ENCODE measurements at regions of chr12 and their contacts with region 1.

Region 1: DNA sequence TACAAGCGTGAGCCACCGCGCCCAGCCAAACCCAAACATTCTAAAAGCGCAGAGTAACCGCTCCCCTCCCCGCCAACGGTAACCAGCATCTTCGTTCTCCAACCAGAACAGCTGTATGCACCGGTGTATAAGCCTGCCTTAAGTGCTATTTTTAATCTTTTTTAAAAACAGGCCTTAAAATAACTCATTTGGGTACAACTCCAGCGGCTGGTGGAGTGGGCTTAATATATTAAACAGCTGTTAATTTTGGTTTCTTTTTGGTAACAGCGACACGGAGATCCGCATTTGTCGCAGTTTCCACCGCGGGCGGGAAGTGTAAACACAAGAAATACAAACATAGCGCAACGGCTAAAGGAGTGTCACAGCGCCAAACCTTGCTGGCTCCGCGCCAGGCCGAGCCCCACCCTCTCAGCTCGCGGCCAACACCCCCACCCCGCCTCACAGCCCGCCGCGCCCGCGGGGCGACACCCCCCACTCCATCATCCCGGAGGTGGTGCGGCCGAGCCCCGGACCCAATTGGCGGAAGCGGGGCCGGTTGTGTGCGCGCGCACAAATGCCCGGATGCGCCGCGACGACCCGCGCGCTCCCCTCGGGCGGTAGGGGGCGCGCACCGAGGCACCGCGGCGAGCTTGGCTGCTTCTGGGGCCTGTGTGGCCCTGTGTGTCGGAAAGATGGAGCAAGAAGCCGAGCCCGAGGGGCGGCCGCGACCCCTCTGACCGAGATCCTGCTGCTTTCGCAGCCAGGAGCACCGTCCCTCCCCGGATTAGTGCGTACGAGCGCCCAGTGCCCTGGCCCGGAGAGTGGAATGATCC is at the start of gene MDM2:
- DNase-seq: peak; percentile 99
- H3K4me3 Mint-ChIP-seq: peak within 1 kb of the TSS; percentile 90
- H3K27ac Mint-ChIP-seq: peak within 1 kb of the TSS; percentile 98
- H3K4me1 Mint-ChIP-seq: peaks cover 25% of the 10 kb centered on the region
- H3K27me3 Mint-ChIP-seq: peaks cover 3% of the 10 kb centered on the region
- total RNA-seq, gene MDM2: 227 and 233 TPM in 2 replicates

Region 2: DNA sequence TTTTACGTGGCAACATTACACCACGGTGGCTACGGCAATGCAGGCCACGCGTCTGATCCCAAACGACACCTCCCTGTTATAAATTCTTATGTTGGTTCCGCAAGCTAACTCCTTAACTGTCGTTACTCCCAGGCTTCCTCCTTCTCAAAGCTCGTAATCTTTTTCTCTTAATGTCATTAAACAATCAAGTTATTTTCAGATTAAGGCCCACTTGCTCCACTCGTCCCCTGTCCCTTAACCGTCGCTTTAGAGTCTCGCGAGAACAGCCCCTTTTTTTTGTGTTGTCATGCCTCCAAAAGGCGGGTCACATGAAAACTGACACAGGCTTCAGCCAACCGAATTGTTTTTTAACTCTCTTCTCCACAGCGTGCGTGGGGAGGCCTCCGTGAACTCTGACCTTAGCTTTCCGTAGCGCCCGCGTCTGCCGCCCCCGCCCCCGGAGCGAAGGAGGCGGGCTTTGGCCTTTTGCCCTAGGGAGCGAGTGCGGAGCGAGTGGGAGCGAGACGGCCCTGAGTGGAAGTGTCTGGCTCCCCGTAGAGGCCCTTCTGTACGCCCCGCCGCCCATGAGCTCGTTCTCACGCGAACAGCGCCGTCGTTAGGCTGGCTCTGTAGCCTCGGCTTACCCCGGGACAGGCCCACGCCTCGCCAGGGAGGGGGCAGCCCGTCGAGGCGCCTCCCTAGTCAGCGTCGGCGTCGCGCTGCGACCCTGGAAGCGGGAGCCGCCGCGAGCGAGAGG is 1538.7 kb before region 1 on chr12 and contains the start of gene CAND1:
- intact Hi-C with region 1: loop called (anchors 2 kb)
- DNase-seq: peak; percentile 99
- H3K4me3 Mint-ChIP-seq: peak within 1 kb of the TSS; percentile 90
- H3K27ac Mint-ChIP-seq: peak within 1 kb of the TSS; percentile 100
- H3K4me1 Mint-ChIP-seq: peaks cover 30% of the 10 kb centered on the region
- H3K27me3 Mint-ChIP-seq: no peaks in the 10 kb centered on the region
- total RNA-seq, gene CAND1: 202 and 216 TPM in 2 replicates

Region 3: DNA sequence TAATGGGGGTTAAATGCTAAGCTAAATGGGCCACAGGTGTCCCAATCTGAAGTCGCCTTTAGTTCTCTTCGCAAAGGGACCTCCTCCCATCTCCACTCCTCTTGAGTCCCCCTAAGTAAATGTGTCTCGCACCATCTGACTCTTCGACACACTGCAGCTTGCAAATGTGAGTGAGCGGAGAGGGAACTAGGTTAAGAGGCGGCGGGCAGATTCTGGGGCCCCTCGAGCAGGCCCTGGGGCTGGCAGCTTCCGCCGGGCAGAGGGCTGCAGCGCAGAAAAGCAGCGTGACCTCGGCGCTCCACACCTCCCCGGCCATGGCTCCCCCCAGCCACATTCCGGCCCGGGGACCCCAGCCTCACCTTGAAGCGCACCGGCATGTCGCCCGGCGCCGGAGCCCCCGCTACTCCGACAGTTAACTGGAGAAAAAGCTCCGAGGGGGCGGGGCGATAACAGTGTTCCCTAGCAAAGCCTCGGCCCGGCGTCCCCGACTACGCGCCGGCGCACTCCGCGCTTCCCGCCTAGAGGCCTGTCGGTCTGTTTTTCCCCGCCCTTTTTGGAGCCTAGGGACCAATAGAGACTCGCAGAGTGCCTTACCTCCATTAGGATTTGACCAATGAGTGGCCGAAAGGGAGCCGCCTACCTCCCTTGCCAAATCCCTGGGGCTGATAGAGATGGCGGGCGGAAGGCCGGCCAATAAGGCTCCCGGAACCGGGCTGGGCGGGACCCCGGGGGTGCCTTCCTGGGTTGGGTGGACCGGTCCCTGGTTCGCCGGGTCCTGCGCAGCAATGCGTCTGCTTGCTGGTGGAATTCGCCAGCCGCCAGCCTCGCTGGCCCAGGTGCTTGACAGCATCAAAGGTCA is 475.7 kb before region 1 on chr12 and contains the start of gene MDM1:
- intact Hi-C with region 1: loop called (anchors 1 kb)
- DNase-seq: peak; percentile 98
- H3K4me3 Mint-ChIP-seq: peak within 1 kb of the TSS; percentile 88
- H3K27ac Mint-ChIP-seq: peak within 1 kb of the TSS; percentile 81
- H3K4me1 Mint-ChIP-seq: peaks cover 37% of the 10 kb centered on the region
- H3K27me3 Mint-ChIP-seq: peaks cover 9% of the 10 kb centered on the region
- total RNA-seq, gene MDM1: 23.2 and 24.9 TPM in 2 replicates

Region 4: DNA sequence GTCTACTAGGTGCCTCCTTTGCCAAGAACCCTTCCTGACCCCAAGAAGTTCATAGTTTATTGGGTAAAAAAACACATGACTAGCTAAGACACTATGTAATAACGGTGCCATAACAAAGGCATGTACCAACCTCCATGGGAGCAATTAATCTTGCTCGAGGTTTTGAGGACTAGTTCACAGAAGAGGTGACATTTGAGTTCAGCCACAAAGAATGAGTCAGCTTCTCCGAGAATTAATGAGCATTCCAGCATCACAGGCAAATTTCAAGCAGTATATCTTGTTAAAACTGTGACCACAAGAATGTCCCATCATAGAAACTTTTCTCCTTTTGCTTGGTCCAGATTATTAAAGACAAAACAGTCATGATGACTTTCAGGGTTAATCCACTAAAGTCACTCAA is 310.1 kb before region 1 on chr12:
- intact Hi-C with region 1: loop called (anchors 10 kb)
- DNase-seq: peak; percentile 69
- H3K4me3 Mint-ChIP-seq: peak overlapping the region; percentile 66
- H3K27ac Mint-ChIP-seq: peak overlapping the region; percentile 89
- H3K4me1 Mint-ChIP-seq: peaks cover 34% of the 10 kb centered on the region
- H3K27me3 Mint-ChIP-seq: no peaks in the 10 kb centered on the region

Region 5: DNA sequence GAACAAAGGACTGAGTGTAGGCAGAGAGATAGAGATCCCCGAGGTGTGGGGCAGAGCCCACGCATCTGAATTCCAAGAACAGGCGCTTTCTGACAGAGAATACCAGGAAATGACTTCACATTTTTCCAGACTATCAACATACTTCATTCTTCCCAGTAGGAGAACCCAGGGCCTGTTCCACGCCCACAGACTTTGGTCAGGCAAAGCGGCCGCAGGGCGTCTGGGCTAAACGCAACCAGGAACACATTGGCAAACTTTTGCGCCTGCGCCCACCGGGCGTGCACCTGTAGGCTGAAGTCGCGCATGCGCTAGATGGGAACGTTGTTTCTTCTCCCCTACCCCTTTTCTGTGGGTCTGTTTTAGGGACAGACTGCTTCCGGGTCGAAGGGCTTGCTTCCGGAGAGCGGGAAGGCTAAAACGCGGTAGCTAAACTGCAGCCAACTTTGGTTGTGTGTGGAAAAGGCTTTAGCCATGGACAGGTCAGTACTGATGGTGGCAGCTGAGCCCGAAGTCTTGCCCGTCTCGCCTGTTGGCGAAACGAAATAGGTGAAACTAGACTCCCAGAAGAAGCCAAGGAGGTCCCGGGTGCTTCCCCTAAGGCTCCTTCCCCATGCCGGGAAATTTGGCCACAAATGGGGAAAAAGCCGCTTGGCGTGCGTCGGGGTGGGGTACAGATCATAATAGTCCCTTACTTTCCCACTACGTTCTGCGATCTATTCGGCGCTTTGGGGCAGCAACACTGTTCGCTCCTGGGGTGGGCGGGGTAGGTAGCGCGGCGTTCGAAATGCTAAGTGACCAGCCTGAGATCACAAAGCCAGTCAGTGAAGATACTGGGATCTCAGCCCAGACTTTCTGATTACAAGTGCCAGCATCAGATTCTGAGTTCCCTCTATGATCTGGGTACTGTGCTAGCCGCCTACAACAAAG is 120.9 kb before region 1 on chr12 and contains the start of gene NUP107:
- intact Hi-C with region 1: loop called (anchors 1 kb)
- DNase-seq: peak; percentile 99
- H3K4me3 Mint-ChIP-seq: peak within 1 kb of the TSS; percentile 95
- H3K27ac Mint-ChIP-seq: peak within 1 kb of the TSS; percentile 92
- H3K4me1 Mint-ChIP-seq: peaks cover 33% of the 10 kb centered on the region
- H3K27me3 Mint-ChIP-seq: no peaks in the 10 kb centered on the region
- total RNA-seq, gene NUP107: 127 and 128 TPM in 2 replicates

Region 6: GRCh38 chr12:68825569-68826217 is 17.9 kb after region 1 on chr12:
- intact Hi-C with region 1: loop called (anchors 2 kb)
- DNase-seq: peak; percentile 40
- H3K4me3 Mint-ChIP-seq: no peak overlapping the region
- H3K27ac Mint-ChIP-seq: peak overlapping the region; percentile 75
- H3K4me1 Mint-ChIP-seq: peaks cover 25% of the 10 kb centered on the region
- H3K27me3 Mint-ChIP-seq: no peaks in the 10 kb centered on the region

Region 7: GRCh38 chr12:69585189-69586062 is 777.6 kb after region 1 on chr12 and contains the start of gene CCT2:
- intact Hi-C with region 1: loop called (anchors 5 kb)
- DNase-seq: peak; percentile 99
- H3K4me3 Mint-ChIP-seq: peak within 1 kb of the TSS; percentile 99
- H3K27ac Mint-ChIP-seq: peak within 1 kb of the TSS; percentile 99
- H3K4me1 Mint-ChIP-seq: peaks cover 14% of the 10 kb centered on the region
- H3K27me3 Mint-ChIP-seq: no peaks in the 10 kb centered on the region
- total RNA-seq, gene CCT2: 490 and 511 TPM in 2 replicates